Mammary epithelial cell (primary cell): ENCODE measurements at regions of chr2 and their contacts with region 1.

Region 1: GRCh38 chr2:64062829-64063228 is 43.6 kb upstream of the VPS54 start:
- DNase-seq: peak; percentile 91
- H3K4me3 ChIP-seq: no peak overlapping the region
- H3K27ac ChIP-seq: peak overlapping the region; percentile 20
- H3K4me1 ChIP-seq: peaks cover 15% of the 10 kb centered on the region
- H3K27me3 ChIP-seq: no peaks in the 10 kb centered on the region
- CTCF ChIP-seq: no peak

Region 2: GRCh38 chr2:64105670-64106461 is 43.0 kb after region 1 on chr2:
- CTCF ChIA-PET with region 1: no interaction called
- dilution Hi-C with region 1: no loop called
- in situ Hi-C with region 1: no loop called
- intact Hi-C with region 1: loop called (anchors 5 kb)
- DNase-seq: no peak
- H3K4me3 ChIP-seq: no peak overlapping the region
- H3K27ac ChIP-seq: no peak overlapping the region
- H3K4me1 ChIP-seq: peaks cover 20% of the 10 kb centered on the region
- H3K27me3 ChIP-seq: no peaks in the 10 kb centered on the region
- CTCF ChIP-seq: no peak